Dorsolateral prefrontal cortex (tissue), 120 donors: ENCODE measurements at regions of chr9 and their contacts with region 1.

Region 1: DNA sequence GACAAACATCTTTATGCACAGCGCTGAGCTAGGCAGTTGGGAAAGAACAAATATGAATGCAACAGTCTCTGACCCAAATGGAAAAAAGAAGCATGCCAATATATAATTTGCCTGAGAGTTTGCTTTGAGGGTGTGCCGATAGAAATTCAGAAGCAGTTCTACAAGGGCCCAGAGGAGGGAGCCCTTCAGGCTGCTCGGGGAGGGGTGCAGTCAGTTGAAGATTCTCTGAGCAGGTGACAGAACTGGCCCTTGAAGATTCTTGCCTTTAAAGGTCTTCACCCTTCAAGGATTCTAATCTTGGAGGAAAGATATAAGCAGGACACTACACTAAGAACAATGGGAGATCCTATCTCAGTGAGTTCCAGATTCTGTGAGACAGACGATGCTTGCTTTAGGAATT is 3.7 kb upstream of the PAPPA start:
- DNase-seq: no peak
- H3K4me3 ChIP-seq: no peak overlapping the region
- H3K27ac ChIP-seq: no peak overlapping the region
- H3K27me3 ChIP-seq: peaks cover 0 to 84% (median 47%) of the 10 kb centered on the region in 45 donors
- CTCF ChIP-seq: peak in 55 of 56 donors; percentile 13 to 72 (median 55)

Region 2: DNA sequence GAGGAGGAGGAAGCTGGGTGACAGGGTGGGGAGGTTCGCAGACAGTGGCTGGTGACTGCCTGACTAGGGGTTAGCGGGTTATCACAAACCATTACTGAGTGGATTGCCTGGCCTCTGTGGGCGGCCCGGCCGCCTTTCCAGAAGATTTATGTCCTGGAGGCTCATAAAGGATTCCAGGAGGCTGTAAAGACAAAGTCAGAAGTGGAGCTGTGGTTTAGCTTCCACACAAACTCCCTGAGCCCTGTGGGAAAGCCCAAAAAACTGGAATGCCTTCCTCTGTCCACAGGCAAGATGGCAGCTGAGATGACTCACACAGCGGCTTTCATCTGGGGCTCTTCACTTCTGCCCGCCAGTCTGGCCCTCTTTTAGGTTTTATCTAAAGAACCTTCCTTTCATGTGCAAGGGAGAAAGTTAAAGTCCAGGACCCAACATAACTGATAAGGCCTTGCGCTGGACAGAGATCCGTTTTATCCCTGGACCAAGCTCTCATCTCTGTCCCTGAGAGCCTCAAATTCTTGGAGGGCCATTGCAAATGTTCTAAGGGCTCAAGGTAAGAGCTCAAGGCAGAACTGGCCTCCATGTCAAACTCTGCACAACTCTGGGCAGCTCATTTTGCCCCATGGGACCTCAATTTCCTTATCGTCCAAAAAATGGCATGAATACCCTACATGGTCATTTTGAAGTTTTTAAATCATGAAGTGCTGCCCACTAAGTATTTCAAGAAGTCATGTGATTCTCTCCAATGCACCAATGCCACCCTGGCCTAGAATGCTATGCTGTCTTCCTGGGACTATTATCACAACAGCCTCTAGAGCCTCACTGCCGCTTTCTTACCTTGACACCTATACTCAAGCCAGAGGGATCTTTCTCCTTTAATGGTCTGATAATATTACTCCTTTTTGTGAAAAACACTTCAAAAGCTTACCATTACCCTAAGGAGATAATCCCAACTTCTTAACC is 287.8 kb after region 1 on chr9:
- intact Hi-C with region 1: no loop called
- DNase-seq: no peak
- H3K4me3 ChIP-seq: no peak overlapping the region
- H3K27ac ChIP-seq: no peak overlapping the region
- H3K27me3 ChIP-seq: no peaks in the 10 kb centered on the region
- CTCF ChIP-seq: no peak

Region 3: DNA sequence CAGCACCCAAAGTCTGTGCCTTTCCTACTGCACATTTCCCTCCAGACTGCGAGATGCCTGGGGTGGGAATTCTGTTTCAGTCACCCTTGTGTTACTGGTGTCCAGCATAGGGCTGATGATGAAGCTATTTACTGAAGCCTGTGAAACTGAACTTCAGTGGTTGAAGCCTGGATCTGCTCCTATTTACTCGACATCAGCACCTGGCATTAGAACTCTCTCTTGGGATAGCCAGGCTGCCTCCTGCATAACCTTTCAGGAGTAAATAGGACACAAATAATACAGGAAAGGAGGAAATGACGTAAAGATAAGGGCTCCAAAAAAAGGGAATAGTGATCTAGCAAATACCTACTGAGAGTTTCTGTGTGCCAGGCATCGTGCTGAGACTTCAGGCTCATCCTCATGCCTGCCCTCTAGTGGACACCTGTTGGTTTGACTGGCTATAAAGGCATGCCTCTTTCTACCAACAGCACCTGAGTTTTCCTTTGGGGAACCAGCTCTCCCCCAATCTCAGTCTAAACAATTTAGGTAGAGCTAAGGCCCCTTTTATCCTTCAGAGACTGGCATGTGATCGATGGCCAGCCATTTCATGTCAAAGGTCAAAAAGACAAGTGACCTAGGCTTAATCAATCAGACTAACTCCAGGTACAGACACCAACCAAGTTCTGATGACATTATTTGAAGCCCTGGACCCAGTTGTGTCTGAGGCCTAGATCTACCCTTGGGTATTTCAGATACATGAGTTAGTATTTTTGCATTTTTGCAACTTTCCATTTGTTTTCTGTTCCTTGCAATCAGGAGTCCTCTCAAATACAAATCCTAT is 345.2 kb after region 1 on chr9:
- intact Hi-C with region 1: loop called in 1 of 2 experiments (anchors 10 kb)
- DNase-seq: peak in 1 of 10 donors; percentile 39
- H3K4me3 ChIP-seq: no peak overlapping the region
- H3K27ac ChIP-seq: no peak overlapping the region
- H3K27me3 ChIP-seq: no peaks in the 10 kb centered on the region
- CTCF ChIP-seq: peak; percentile 21 to 71 (median 60)

Region 4: DNA sequence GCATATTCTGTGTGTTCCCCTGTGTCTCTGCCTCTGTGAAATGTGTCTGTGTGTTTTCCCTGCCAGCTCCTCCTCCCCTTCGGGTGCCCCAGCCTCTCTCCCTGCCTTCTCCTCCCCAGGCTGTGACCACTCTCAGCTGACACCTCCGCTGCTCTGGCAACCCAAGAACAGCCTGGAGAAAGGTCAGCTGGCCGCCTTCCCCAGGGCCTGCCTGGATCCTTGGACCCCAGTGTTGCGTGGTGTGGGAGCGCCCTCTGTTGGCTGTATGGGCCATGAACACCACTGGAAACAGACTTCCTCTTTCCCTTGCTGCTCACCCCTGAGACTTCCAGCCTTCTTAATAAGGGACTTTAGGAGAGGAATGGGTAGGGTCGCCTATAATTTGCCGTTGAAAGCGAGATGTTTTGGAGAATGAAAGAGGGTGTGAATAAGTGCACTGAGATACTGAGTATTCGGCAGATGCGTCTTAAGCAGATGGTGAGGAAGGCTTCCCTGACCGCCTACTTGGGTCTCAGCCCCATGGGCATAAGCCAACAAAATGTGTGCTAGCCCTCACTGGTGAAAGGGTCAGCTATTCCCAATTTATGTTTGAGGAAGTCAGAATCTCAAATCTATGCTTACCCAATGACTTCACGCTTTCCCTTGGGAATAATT is 422.4 kb after region 1 on chr9:
- intact Hi-C with region 1: loop called (anchors 5 to 10 kb)
- DNase-seq: peak; percentile 61 to 81 (median 72)
- H3K4me3 ChIP-seq: no peak overlapping the region
- H3K27ac ChIP-seq: no peak overlapping the region
- H3K27me3 ChIP-seq: no peaks in the 10 kb centered on the region
- CTCF ChIP-seq: peak; percentile 55 to 94 (median 83)

Region 5: DNA sequence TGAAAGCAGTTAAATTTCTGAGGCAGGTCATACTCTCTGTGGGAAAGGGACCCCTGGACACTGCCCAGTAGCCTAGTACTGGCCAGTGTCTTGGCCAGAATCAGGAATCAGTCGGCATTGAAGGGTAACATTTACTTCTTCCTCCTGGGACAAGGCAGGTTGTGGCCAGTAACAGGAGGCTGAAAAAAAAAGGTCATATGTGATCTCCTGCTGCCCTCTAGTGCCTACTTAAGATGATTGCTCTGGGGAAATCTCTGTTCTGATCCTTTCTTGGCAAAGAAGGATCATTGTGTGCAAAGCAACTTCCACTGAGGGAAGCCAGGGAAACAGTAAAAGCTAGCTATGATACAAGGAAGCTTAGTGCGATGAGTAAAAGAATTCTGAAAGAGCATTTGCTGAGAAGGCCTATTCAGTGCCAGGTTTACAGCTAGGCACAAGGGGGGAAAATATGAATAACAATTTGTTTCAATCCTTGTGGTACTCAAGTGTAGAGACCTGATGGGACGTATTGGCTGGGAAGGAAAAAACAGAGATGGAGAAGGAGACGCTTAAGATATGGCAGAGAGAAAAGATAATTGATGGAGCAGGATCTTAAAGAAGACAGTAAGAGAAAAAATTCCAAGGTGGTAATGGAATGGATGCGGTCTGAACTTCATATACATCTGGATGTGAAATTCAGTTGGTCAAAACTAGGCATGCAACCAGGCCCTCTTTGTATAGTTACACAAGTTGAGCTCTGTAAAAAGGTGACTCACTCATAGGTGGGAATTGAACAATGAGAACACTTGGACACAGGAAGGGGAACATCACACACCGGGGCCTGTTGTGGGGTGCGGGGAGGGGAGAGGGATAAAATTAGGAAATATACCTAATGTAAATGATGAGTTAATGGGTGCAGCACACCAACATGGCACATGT is 511.5 kb after region 1 on chr9:
- intact Hi-C with region 1: loop called (anchors 5 to 10 kb)
- DNase-seq: peak in 1 of 10 donors; percentile 30
- H3K4me3 ChIP-seq: no peak overlapping the region
- H3K27ac ChIP-seq: no peak overlapping the region
- H3K27me3 ChIP-seq: no peaks in the 10 kb centered on the region
- CTCF ChIP-seq: peak in 55 of 56 donors; percentile 37 to 91 (median 78)

Region 6: DNA sequence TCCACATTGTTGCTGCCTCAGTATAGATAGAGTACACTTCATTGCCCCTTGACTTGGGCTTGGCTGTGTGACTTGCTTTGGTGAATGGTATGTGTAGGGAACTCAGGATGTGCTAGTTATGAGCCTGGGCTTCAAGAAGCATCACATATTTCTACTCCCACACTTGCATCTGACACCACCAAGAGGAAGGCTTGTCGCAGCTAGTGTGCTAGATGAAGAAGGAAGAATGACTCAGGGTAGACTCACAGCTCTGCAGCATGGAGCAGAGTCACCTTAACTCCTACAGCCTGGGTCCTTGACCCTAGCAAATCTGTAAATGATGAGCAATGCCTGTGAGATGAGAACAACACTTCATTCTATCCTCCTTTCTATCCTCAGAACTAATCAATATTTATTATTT is 1003.2 kb after region 1 on chr9:
- intact Hi-C with region 1: no loop called
- DNase-seq: no peak
- H3K4me3 ChIP-seq: no peak overlapping the region
- H3K27ac ChIP-seq: no peak overlapping the region
- H3K27me3 ChIP-seq: no peaks in the 10 kb centered on the region
- CTCF ChIP-seq: no peak